ENCODE measurements at regions of chr2 and their contacts with region 1.

Region 1: DNA sequence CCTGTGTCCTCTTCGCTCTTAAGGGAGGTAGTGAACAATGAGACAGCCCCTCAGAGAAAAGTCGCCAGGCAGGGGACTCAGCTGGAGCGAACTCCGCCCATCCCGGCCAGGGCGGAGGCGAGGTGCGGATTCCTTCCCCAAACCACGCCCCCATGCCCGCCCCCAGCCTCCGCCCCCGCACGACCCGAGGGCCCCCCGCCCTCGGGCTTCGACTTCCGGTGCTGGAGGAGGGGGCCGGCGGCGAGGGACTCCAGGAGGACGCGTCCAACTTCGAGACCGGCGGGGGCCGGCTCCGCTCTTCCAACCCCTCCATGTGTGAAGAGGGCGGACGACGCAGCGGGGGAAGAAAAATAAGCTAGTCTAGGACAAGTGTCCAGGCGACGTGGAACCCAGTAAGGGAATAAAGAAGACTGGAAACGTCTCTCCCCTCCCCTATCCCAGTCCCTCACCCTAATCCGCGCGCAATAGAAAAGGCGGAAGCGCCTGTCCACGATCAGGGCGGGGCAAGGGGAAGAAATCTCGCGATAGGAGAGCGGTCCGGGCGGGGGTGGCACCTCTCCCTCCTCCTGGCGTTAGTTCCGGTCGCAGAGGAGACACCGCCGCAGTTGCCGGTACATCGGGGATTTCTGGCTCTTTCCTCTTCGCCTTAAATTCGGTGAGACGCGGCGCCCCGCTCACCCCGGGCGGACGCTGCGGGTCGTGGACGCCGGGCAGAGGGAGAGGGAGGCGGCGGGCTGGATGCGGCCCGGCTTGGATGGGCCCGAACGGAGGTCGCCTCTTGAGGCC is at the start of gene BZW1:
- DNase-seq: peak; percentile 94
- H3K4me3 Mint-ChIP-seq: peak within 1 kb of the TSS; percentile 97
- H3K27ac Mint-ChIP-seq: peak within 1 kb of the TSS; percentile 96
- H3K4me1 Mint-ChIP-seq: peaks cover 40% of the 10 kb centered on the region
- H3K27me3 Mint-ChIP-seq: no peaks in the 10 kb centered on the region
- total RNA-seq, gene BZW1: 548 and 571 TPM in 2 replicates

Region 2: DNA sequence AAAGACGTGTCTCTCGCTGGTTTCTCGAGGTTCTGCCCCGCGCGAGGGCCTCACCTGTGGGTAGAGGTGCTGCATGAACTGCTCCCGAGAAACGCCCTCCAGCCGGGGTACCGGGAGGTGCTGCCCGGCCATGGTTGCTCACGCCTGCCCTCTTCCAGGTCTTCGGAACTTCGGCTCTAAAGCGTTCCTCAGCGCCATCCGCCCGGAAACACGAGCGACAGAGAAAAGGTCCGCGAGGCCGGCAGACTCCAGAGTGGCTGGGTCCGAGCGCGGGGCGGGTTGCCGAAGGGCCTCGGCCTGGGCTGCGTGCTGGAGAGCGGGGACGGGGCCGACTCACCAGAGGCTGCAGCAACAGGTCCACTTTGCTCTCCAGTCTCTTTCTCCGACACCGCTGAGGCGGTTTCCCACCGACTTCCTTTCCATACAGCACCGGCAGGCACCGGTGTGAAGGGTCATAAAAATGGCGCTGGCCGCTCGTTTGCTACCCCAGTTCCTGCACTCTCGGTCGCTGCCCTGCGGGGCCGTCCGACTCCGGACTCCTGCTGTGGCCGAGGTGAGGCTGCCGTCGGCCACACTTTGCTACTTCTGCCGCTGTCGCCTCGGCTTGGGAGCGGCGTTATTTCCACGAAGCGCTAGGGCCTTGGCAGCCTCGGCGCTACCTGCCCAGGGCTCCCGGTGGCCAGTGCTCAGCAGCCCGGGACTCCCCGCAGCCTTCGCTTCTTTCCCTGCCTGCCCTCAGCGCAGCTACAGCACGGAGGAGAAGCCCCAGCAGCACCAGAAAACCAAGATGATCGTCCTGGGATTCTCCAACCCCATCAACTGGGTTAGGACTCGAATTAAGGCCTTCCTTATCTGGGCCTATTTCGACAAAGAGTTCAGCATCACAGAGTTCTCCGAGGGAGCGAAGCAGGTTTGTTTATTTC is 855.9 kb before region 1 on chr2 and contains the starts of genes MAIP1 and TYW5:
- intact Hi-C with region 1: loop called (anchors 5 kb)
- DNase-seq: peak; percentile 73
- H3K4me3 Mint-ChIP-seq: peak within 1 kb of the TSS; percentile 93
- H3K27ac Mint-ChIP-seq: peak within 1 kb of the TSS; percentile 79
- H3K4me1 Mint-ChIP-seq: peaks cover 43% of the 10 kb centered on the region
- H3K27me3 Mint-ChIP-seq: no peaks in the 10 kb centered on the region
- total RNA-seq, gene MAIP1: 26.0 and 29.9 TPM in 2 replicates
- total RNA-seq, gene TYW5: 11.0 and 12.3 TPM in 2 replicates

Region 3: DNA sequence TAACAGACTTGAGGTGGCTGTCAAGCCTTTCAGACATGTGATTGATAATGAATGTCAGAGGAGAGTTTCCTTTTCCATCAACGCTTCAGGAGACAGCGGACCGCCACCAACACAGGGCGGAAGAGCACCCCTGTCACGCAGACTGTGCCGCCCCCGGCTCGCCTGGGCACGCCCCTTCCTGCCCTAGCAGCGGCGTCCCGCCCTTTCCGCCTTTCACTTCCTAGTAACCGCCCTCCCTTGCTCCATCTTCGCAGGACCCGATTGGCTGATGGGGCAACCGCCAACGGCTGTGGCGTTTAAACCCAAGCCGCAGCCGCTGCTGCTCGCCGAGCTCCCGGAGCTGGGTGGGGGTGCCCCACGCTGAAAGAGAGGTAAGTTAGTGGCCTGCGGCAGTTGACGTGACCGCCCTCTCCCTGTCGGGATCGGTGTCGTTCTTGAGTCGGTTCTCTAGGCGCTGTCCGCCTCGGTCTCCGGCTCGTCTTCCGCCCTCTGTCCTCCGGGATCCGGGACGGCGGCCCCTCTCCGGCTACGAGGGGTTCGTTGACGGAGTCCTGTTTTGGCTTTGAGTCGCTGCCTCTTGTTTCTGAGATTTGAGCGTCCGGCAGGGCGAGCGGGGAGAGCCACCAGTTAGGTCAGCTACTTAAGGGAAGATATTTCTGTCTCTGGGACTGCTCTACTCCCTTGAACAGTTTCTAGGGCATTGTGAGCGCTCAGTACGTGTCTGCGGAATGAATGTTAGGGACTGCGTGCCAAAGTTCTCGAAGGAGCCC is 285.5 kb before region 1 on chr2 and contains the start of gene SGO2:
- intact Hi-C with region 1: loop called (anchors 5 kb)
- DNase-seq: peak; percentile 96
- H3K4me3 Mint-ChIP-seq: peak within 1 kb of the TSS; percentile 98
- H3K27ac Mint-ChIP-seq: peak within 1 kb of the TSS; percentile 94
- H3K4me1 Mint-ChIP-seq: peaks cover 30% of the 10 kb centered on the region
- H3K27me3 Mint-ChIP-seq: no peaks in the 10 kb centered on the region
- total RNA-seq, gene SGO2: 30.3 and 32.3 TPM in 2 replicates

Region 4: GRCh38 chr2:200713003-200713703 is 98.4 kb before region 1 on chr2:
- intact Hi-C with region 1: loop called (anchors 1 kb)
- DNase-seq: peak; percentile 89
- H3K4me3 Mint-ChIP-seq: peak overlapping the region; percentile 69
- H3K27ac Mint-ChIP-seq: peak overlapping the region; percentile 99
- H3K4me1 Mint-ChIP-seq: peaks cover 38% of the 10 kb centered on the region
- H3K27me3 Mint-ChIP-seq: no peaks in the 10 kb centered on the region

Region 5: GRCh38 chr2:200787348-200788120 is 24.0 kb before region 1 on chr2:
- intact Hi-C with region 1: loop called (anchors 2 kb)
- DNase-seq: no peak
- H3K4me3 Mint-ChIP-seq: no peak overlapping the region
- H3K27ac Mint-ChIP-seq: no peak overlapping the region
- H3K4me1 Mint-ChIP-seq: peaks cover 15% of the 10 kb centered on the region
- H3K27me3 Mint-ChIP-seq: peaks cover 10% of the 10 kb centered on the region

Region 6: GRCh38 chr2:200864176-200864976 is 52.8 kb after region 1 on chr2 and contains the start of gene CLK1:
- intact Hi-C with region 1: loop called (anchors 1 kb)
- DNase-seq: peak; percentile 91
- H3K4me3 Mint-ChIP-seq: peak within 1 kb of the TSS; percentile 93
- H3K27ac Mint-ChIP-seq: peak within 1 kb of the TSS; percentile 94
- H3K4me1 Mint-ChIP-seq: peaks cover 32% of the 10 kb centered on the region
- H3K27me3 Mint-ChIP-seq: no peaks in the 10 kb centered on the region
- total RNA-seq, gene CLK1: 114 and 122 TPM in 2 replicates

Region 7: GRCh38 chr2:201071479-201072200 is 260.1 kb after region 1 on chr2 and contains the starts of genes HYCC2 and NDUFB3:
- intact Hi-C with region 1: loop called (anchors 1 kb)
- DNase-seq: peak; percentile 92
- H3K4me3 Mint-ChIP-seq: peak within 1 kb of the TSS; percentile 93
- H3K27ac Mint-ChIP-seq: peak within 1 kb of the TSS; percentile 93
- H3K4me1 Mint-ChIP-seq: peaks cover 37% of the 10 kb centered on the region
- H3K27me3 Mint-ChIP-seq: no peaks in the 10 kb centered on the region
- total RNA-seq, gene HYCC2: 20.1 and 23.8 TPM in 2 replicates
- total RNA-seq, gene NDUFB3: 123 and 125 TPM in 2 replicates

Measured in activated T-helper 2 cell treated with anti-CD3 and anti-CD28 coated beads, Interferon-gamma antibody, Interleukin-2, Interleukin-4, amounts not matched to agents 10 μg/mL and 5 μg/mL and 100 μg/mL, durations not matched to agents 14 hours and 24 hours and 36 hours (primary cell).